Mammary epithelial cell (primary cell): ENCODE measurements at regions of chr6 and their contacts with region 1.

Region 1: DNA sequence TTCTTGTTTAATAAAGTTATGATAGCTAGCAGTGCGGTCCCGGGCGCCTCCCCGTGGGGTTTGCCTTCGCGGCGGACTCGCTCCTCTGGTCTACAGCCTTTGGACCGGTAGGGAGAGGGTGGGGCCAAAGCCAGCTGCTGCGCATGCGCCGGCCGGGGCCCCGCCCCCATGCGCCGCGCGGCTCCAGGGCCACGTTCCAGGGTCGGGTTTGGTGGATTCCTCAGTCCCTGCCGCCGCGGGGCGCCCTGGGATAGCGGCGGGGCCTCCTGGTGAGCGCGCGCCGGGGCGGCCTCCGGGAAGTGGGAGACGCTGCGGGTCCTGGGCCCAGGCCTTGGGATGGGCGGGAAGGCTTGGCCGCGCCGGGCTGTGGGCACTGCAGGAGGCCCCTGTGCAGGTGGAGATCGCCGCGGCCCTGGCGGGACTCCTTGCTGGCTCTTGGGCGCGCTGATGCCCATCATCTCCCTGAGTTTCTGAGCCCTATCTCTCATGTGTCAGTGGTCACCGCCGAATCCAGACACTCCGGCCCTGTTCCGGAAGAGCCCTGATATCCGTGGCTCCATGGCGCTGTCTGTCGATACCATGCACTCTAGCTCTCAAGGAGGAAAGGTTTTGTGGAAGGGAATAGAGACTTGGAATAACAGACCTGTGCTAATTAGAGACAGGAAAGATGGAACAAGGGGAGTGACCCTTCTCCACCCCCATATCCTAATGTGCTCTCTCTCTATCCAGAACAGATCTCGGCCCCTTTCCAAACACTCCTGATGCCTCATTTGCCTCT is at the start of gene VARS2:
- DNase-seq: peak; percentile 94
- H3K4me3 ChIP-seq: peak within 1 kb of the TSS; percentile 23 to 65 (median 50)
- H3K27ac ChIP-seq: peak within 1 kb of the TSS; percentile 55
- H3K4me1 ChIP-seq: peaks cover 26% of the 10 kb centered on the region
- H3K27me3 ChIP-seq: no peaks in the 10 kb centered on the region
- CTCF ChIP-seq: peak; percentile 26 to 59
- total RNA-seq, gene VARS2: 17.7 to 25.7 TPM

Region 2: DNA sequence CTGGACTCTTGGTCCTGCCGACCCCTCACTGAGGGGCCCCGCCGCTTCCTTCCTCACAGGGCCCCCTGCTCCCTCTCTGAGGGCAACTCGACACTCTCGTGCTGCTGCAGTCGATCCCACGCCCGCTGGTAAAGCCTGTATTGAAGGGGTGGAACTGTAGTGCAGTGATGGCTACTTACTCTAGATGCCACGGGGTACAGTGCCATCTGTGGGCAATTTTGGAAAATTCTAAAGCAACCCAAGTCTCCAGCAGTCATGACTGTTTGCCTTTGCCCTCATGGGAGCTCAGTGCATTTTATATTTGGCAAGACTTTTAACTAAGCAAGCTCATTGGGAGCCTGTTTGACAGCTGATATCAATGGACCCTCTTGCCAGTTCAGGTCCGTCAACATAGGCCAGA is 273.8 kb before region 1 on chr6:
- CTCF ChIA-PET with region 1: no interaction called
- dilution Hi-C with region 1: no loop called
- in situ Hi-C with region 1: no loop called
- intact Hi-C with region 1: no loop called
- DNase-seq: no peak
- H3K4me3 ChIP-seq: no peak overlapping the region
- H3K27ac ChIP-seq: no peak overlapping the region
- H3K4me1 ChIP-seq: no peaks in the 10 kb centered on the region
- H3K27me3 ChIP-seq: no peaks in the 10 kb centered on the region
- CTCF ChIP-seq: peak in 1 of 2 donors; percentile 2

Region 3: GRCh38 chr6:30742316-30743098 is 171.8 kb before region 1 on chr6 and contains the start of gene FLOT1:
- CTCF ChIA-PET with region 1: no interaction called
- dilution Hi-C with region 1: no loop called
- in situ Hi-C with region 1: no loop called
- intact Hi-C with region 1: loop called (anchors 2 kb)
- DNase-seq: peak; percentile 99
- H3K4me3 ChIP-seq: peak within 1 kb of the TSS; percentile 69 to 93 (median 76)
- H3K27ac ChIP-seq: peak within 1 kb of the TSS; percentile 91
- H3K4me1 ChIP-seq: peaks cover 21% of the 10 kb centered on the region
- H3K27me3 ChIP-seq: no peaks in the 10 kb centered on the region
- CTCF ChIP-seq: no peak
- total RNA-seq, gene FLOT1: 53.9 to 57.5 TPM

Region 4: DNA sequence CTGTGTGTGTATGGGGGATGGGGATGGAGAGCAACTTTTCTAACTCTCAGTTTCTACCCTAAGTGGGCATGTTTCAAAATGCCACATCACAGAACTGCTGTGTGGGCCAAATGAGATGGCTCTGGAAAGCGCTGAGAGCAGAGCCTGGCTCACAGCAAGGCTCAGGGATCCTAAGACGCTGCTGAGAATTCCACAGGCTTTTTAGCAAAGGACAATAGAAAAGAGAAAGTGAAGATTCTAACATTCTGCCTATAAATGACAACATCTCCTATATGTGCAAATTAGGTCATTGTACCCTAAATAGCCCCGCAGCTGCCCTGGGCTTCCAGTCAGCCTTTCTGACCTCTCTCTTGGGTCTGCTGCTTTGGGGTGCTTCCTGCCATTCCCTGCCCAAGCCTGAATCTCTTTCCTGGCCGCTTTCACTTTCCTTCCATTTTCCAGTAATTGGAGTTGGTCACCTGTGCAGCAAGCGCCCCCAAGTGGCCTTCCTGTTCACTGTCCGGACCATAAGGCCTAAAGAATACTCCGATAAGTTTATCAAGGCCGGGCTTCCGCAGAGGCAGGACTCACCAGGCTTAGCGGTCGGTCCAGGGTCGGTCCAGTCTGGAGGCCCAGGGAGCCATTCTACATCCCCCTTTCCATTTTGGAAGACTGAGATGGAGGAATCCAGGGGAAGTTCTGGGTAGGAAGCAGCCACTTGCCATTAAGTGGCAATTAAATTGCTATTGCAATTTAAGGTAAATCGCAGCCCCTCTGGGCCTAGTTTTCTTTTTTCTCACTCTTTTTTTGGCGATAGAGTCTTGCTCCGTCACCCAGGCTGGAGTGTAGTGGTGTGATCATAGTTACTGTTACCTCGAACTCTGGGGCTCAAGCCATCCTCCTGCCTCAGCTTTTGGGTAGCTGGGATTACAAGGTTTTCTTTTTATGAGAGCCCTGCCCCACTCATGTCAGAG is 36.6 kb before region 1 on chr6:
- CTCF ChIA-PET with region 1: interaction called, 5 read pairs
- dilution Hi-C with region 1: no loop called
- in situ Hi-C with region 1: no loop called
- intact Hi-C with region 1: loop called (anchors 1 kb)
- DNase-seq: peak; percentile 80
- H3K4me3 ChIP-seq: peak overlapping the region in 2 of 3 experiments; percentile 13 to 20
- H3K27ac ChIP-seq: peak overlapping the region; percentile 63
- H3K4me1 ChIP-seq: peaks cover 37% of the 10 kb centered on the region
- H3K27me3 ChIP-seq: no peaks in the 10 kb centered on the region
- CTCF ChIP-seq: peak; percentile 92 to 96

Region 5: GRCh38 chr6:30893001-30893591 is 21.2 kb before region 1 on chr6:
- CTCF ChIA-PET with region 1: no interaction called
- dilution Hi-C with region 1: no loop called
- in situ Hi-C with region 1: no loop called
- intact Hi-C with region 1: no loop called
- DNase-seq: no peak
- H3K4me3 ChIP-seq: no peak overlapping the region
- H3K27ac ChIP-seq: no peak overlapping the region
- H3K4me1 ChIP-seq: peaks cover 31% of the 10 kb centered on the region
- H3K27me3 ChIP-seq: no peaks in the 10 kb centered on the region
- CTCF ChIP-seq: peak in 1 of 2 donors; percentile 11

Region 6: GRCh38 chr6:30955367-30956042 is 41.2 kb after region 1 on chr6:
- CTCF ChIA-PET with region 1: no interaction called
- dilution Hi-C with region 1: loop called (anchors 5 kb)
- in situ Hi-C with region 1: no loop called
- intact Hi-C with region 1: no loop called
- DNase-seq: no peak
- H3K4me3 ChIP-seq: peak overlapping the region in 1 of 3 experiments; percentile 18
- H3K27ac ChIP-seq: no peak overlapping the region
- H3K4me1 ChIP-seq: peaks cover 6% of the 10 kb centered on the region
- H3K27me3 ChIP-seq: peaks cover 3% of the 10 kb centered on the region
- CTCF ChIP-seq: no peak

Region 7: GRCh38 chr6:30981942-30982772 is 67.9 kb after region 1 on chr6:
- CTCF ChIA-PET with region 1: no interaction called
- dilution Hi-C with region 1: no loop called
- in situ Hi-C with region 1: no loop called
- intact Hi-C with region 1: no loop called
- DNase-seq: peak; percentile 82
- H3K4me3 ChIP-seq: peak overlapping the region; percentile 14 to 41 (median 15)
- H3K27ac ChIP-seq: no peak overlapping the region
- H3K4me1 ChIP-seq: peaks cover 6% of the 10 kb centered on the region
- H3K27me3 ChIP-seq: no peaks in the 10 kb centered on the region
- CTCF ChIP-seq: peak; percentile 39 to 63

Region 8: GRCh38 chr6:31079656-31080261 is 165.5 kb after region 1 on chr6:
- CTCF ChIA-PET with region 1: interaction called, 3 read pairs
- dilution Hi-C with region 1: loop called (anchors 5 kb)
- in situ Hi-C with region 1: loop called (anchors 5 kb)
- intact Hi-C with region 1: loop called (anchors 2 kb)
- DNase-seq: peak; percentile 49
- H3K4me3 ChIP-seq: peak overlapping the region in 1 of 3 experiments; percentile 27
- H3K27ac ChIP-seq: no peak overlapping the region
- H3K4me1 ChIP-seq: peaks cover 8% of the 10 kb centered on the region
- H3K27me3 ChIP-seq: no peaks in the 10 kb centered on the region
- CTCF ChIP-seq: peak; percentile 72 to 83

Region 9: GRCh38 chr6:31128093-31128676 is 213.9 kb after region 1 on chr6:
- CTCF ChIA-PET with region 1: interaction called, 3 read pairs
- dilution Hi-C with region 1: no loop called
- in situ Hi-C with region 1: no loop called
- intact Hi-C with region 1: loop called (anchors 1 kb)
- DNase-seq: peak; percentile 46
- H3K4me3 ChIP-seq: no peak overlapping the region
- H3K27ac ChIP-seq: no peak overlapping the region
- H3K4me1 ChIP-seq: peaks cover 38% of the 10 kb centered on the region
- H3K27me3 ChIP-seq: no peaks in the 10 kb centered on the region
- CTCF ChIP-seq: peak; percentile 82 to 90